Activated T-helper 2 cell treated with anti-CD3 and anti-CD28 coated beads, Interferon-gamma antibody, Interleukin-2, Interleukin-4, amounts not matched to agents 10 μg/mL and 5 μg/mL and 100 μg/mL, durations not matched to agents 14 hours and 24 hours and 36 hours (primary cell): ENCODE measurements at regions of chr10 and their contacts with region 1.

Region 1: GRCh38 chr10:60208676-60209269 is 180.9 kb downstream of the ANK3 start:
- DNase-seq: no peak
- H3K4me3 Mint-ChIP-seq: no peak overlapping the region
- H3K27ac Mint-ChIP-seq: no peak overlapping the region
- H3K4me1 Mint-ChIP-seq: peaks cover 19% of the 10 kb centered on the region
- H3K27me3 Mint-ChIP-seq: no peaks in the 10 kb centered on the region

Region 2: GRCh38 chr10:60114765-60115586 is 93.8 kb before region 1 on chr10:
- intact Hi-C with region 1: loop called (anchors 1 kb)
- DNase-seq: no peak
- H3K4me3 Mint-ChIP-seq: no peak overlapping the region
- H3K27ac Mint-ChIP-seq: no peak overlapping the region
- H3K4me1 Mint-ChIP-seq: no peaks in the 10 kb centered on the region
- H3K27me3 Mint-ChIP-seq: no peaks in the 10 kb centered on the region

Region 3: DNA sequence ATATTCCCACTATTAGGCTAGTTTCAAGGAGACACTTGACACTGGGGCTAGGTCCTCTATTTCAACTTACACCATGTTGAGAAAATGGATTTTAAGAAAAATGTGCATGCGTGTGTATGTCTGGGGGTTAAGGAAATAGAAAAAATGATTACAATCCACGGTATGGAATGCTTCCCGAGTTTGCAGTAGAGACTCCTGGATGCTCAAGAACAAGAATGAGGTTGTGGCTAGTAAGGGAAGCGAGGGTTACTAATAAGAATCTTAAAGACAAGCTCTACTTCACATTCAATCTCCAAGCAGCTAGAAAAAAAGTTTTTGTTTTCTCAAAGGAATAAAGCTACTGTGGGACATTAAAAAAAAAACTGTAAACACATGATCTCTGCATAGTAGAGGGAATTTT is 126.2 kb after region 1 on chr10:
- intact Hi-C with region 1: no loop called
- DNase-seq: no peak
- H3K4me3 Mint-ChIP-seq: no peak overlapping the region
- H3K27ac Mint-ChIP-seq: no peak overlapping the region
- H3K4me1 Mint-ChIP-seq: no peaks in the 10 kb centered on the region
- H3K27me3 Mint-ChIP-seq: no peaks in the 10 kb centered on the region

Region 4: GRCh38 chr10:60367431-60367830 is 158.7 kb after region 1 on chr10:
- intact Hi-C with region 1: no loop called
- DNase-seq: no peak
- H3K4me3 Mint-ChIP-seq: no peak overlapping the region
- H3K27ac Mint-ChIP-seq: no peak overlapping the region
- H3K4me1 Mint-ChIP-seq: no peaks in the 10 kb centered on the region
- H3K27me3 Mint-ChIP-seq: no peaks in the 10 kb centered on the region